OCI-LY7 (cell line): ENCODE measurements at regions of chr6 and their contacts with region 1.

Region 1: GRCh38 chr6:133952815-133953633 is at the start of gene TBPL1:
- DNase-seq: peak; percentile 96
- H3K4me3 ChIP-seq: peak within 1 kb of the TSS; percentile 99
- H3K27ac ChIP-seq: peak within 1 kb of the TSS; percentile 77
- H3K4me1 ChIP-seq: peaks cover 45% of the 10 kb centered on the region
- CTCF ChIP-seq: no peak
- total RNA-seq, gene TBPL1: 25.9 and 27.8 TPM in 2 replicates

Region 2: DNA sequence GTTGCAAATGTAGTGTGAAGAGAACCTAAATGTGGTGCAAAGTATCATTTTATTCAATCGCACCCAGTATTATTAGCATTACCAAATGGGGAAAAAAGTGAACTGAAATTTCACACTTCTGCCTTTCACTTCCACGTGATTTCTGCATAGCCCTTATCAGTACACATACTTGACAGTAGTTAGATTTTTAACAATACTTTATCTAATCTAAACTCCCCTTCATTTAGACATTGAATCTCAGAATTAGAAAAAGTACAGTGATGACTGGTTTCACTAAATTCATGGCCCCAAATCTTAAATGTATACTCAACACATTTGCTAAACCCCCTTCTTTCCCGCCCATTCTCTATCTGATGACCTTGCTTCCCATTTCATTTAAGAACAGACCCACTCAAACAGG is 1454.4 kb before region 1 on chr6:
- CTCF ChIA-PET with region 1: no interaction called
- POLR2A ChIA-PET with region 1: no interaction called
- intact Hi-C with region 1: loop called (anchors 5 kb)
- DNase-seq: peak; percentile 81
- H3K4me3 ChIP-seq: peak overlapping the region; percentile 24
- H3K27ac ChIP-seq: peak overlapping the region; percentile 100
- H3K4me1 ChIP-seq: peaks cover 90% of the 10 kb centered on the region
- CTCF ChIP-seq: no peak

Region 3: DNA sequence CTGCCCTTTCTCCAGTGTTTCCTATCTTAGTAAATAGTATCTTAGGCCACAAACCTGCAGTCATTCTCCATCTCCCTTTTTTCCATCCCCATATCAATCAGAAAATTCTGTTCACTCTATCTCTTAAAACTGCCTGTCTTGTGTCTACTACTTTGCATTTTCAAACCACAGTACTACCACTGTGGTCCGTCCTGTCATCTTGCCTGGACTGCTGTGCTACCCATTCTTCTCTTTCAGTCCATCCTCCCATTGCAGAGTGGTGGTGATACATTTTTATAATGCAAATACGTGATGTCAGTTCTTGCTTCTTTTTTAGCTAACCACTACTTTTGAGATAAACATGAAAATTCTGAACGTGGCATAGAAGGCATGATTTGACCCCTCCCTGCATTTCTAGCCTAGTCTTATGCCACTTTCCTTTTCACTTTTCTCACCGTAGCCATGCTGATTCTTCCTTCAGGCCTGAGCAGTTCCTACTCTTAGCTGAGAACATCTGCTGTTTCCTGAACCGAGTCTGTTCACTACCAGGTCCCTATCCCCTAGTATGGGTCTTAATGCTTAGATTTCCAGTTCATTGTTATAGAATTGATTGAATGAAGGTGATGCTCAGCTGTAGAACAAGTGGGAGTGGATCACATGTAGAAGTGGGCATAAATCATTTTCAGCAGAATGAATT is 13.8 kb after region 1 on chr6:
- CTCF ChIA-PET with region 1: interaction called, 4 read pairs
- POLR2A ChIA-PET with region 1: interaction called, 57 read pairs
- intact Hi-C with region 1: no loop called
- DNase-seq: peak; percentile 50
- H3K4me3 ChIP-seq: no peak overlapping the region
- H3K27ac ChIP-seq: no peak overlapping the region
- H3K4me1 ChIP-seq: peaks cover 21% of the 10 kb centered on the region
- CTCF ChIP-seq: no peak

Region 4: GRCh38 chr6:134174672-134175198 is 221.7 kb after region 1 on chr6:
- CTCF ChIA-PET with region 1: no interaction called
- POLR2A ChIA-PET with region 1: no interaction called
- intact Hi-C with region 1: no loop called
- DNase-seq: peak; percentile 93
- H3K4me3 ChIP-seq: peak overlapping the region; percentile 76
- H3K27ac ChIP-seq: peak overlapping the region; percentile 39
- H3K4me1 ChIP-seq: peaks cover 35% of the 10 kb centered on the region
- CTCF ChIP-seq: no peak